GM10248 (cell line): ENCODE measurements at regions of chr11 and their contacts with region 1.

Region 1: GRCh38 chr11:15930442-15931025 is 425.8 kb downstream of the SOX6 start:
- DNase-seq: no peak
- CTCF ChIP-seq: no peak

Region 2: GRCh38 chr11:15941201-15941770 is 10.8 kb after region 1 on chr11:
- CTCF ChIA-PET with region 1: interaction called, 12 read pairs
- POLR2A ChIA-PET with region 1: interaction called, 3 read pairs
- DNase-seq: peak; percentile 78
- CTCF ChIP-seq: peak; percentile 68

Region 3: GRCh38 chr11:16058671-16059070 is 128.1 kb after region 1 on chr11:
- CTCF ChIA-PET with region 1: no interaction called
- POLR2A ChIA-PET with region 1: no interaction called
- DNase-seq: no peak
- CTCF ChIP-seq: no peak